Endothelial cell of umbilical vein (primary cell): ENCODE measurements at regions of chr3 and their contacts with region 1.

Region 1: DNA sequence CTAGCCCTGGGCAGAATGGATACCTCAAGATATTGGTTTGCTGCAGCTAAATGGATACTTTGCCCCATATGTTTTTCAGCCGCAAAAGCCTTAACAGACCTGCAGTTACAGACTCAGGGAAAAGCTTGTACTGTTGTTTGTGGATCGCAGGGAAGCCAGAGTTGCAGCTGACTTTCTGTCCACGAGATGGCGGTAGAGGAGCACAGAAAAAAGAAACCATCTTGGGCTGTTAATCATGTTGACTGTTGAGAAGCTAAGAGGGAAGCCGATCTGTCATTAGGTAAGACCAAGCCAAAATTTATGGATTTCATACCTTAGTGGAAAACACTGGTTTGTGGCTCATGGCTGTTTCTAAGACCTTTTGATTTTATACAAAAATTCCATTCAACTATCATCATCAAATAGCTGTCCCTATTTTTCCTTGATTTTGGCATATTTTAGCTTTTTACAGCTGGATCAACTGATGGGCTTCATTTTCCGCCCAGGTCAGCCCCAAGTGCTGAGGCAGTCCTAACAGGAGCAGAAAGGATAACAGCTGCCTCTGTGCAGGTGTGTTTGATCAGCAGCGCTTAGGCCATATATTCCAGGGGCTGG is 205.7 kb upstream of the ZPLD1 start:
- DNase-seq: peak; percentile 83
- H3K4me3 ChIP-seq: no peak overlapping the region
- H3K27ac ChIP-seq: no peak overlapping the region
- H3K4me1 ChIP-seq: no peaks in the 10 kb centered on the region
- H3K27me3 ChIP-seq: peaks cover 10 to 13% of the 10 kb centered on the region in 2 experiments
- CTCF ChIP-seq: peak; percentile 83 to 89
- POLR2A ChIP-seq: no peak

Region 2: DNA sequence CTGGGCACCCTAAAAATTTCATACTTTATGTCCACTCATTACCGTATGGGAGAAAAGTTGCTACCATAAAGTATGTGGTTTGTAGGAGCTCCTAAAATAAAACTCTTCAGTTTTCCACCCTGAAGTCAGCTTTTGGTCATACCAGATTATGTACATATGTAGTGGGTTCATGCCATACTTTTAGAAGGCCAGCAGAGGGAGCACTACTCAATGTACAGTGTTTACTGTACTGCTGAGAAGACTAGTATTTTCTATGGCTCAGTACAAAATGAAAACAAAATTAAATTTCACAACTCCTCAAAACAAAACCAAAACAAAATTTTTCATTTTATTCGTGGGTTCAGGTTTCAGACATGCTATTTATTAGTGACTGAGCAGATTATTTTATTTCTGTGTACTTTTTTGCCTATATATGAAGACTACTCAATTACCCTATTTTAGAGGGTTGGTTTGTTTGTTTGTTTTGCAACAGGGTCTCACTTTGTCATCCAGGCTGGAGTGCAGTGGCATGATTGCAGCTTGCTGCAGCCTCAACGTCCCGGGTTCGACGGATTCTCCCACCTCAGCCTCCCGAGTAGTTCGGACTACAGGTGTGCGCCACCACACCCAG is 425.9 kb before region 1 on chr3:
- CTCF ChIA-PET with region 1: interaction called, 358 read pairs
- POLR2A ChIA-PET with region 1: no interaction called
- dilution Hi-C with region 1: no loop called
- intact Hi-C with region 1: no loop called
- DNase-seq: peak; percentile 55
- H3K4me3 ChIP-seq: no peak overlapping the region
- H3K27ac ChIP-seq: no peak overlapping the region
- H3K4me1 ChIP-seq: no peaks in the 10 kb centered on the region
- H3K27me3 ChIP-seq: no peaks in the 10 kb centered on the region
- CTCF ChIP-seq: peak; percentile 61 to 66
- POLR2A ChIP-seq: no peak

Region 3: GRCh38 chr3:101861212-101861788 is 367.9 kb before region 1 on chr3:
- CTCF ChIA-PET with region 1: interaction called, 28 read pairs
- POLR2A ChIA-PET with region 1: no interaction called
- dilution Hi-C with region 1: no loop called
- intact Hi-C with region 1: no loop called
- DNase-seq: no peak
- H3K4me3 ChIP-seq: no peak overlapping the region
- H3K27ac ChIP-seq: no peak overlapping the region
- H3K4me1 ChIP-seq: peaks cover 5% of the 10 kb centered on the region
- H3K27me3 ChIP-seq: no peaks in the 10 kb centered on the region
- CTCF ChIP-seq: no peak
- POLR2A ChIP-seq: no peak

Region 4: DNA sequence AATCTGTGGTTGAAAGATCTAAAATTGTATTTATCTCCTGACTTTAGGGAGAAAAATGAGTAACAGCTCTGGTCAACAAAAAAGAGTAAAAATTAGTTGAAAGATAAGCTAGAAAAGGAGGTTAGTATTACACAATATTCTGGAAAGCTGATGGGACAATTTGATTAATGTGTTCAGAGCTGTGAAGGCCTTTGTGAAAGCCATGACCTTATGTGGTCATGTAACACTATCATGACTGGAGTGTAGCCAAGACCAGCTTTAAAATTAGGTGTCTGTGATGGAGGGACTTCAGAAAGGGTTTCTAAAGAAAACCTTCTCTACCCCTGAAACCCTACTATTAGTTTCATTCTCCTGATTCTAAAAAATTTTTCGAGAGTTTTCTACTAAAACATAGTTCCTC is 252.7 kb before region 1 on chr3:
- CTCF ChIA-PET with region 1: interaction called, 13 read pairs
- POLR2A ChIA-PET with region 1: no interaction called
- dilution Hi-C with region 1: no loop called
- intact Hi-C with region 1: no loop called
- DNase-seq: no peak
- H3K4me3 ChIP-seq: no peak overlapping the region
- H3K27ac ChIP-seq: no peak overlapping the region
- H3K4me1 ChIP-seq: no peaks in the 10 kb centered on the region
- H3K27me3 ChIP-seq: no peaks in the 10 kb centered on the region
- CTCF ChIP-seq: no peak
- POLR2A ChIP-seq: no peak

Region 5: DNA sequence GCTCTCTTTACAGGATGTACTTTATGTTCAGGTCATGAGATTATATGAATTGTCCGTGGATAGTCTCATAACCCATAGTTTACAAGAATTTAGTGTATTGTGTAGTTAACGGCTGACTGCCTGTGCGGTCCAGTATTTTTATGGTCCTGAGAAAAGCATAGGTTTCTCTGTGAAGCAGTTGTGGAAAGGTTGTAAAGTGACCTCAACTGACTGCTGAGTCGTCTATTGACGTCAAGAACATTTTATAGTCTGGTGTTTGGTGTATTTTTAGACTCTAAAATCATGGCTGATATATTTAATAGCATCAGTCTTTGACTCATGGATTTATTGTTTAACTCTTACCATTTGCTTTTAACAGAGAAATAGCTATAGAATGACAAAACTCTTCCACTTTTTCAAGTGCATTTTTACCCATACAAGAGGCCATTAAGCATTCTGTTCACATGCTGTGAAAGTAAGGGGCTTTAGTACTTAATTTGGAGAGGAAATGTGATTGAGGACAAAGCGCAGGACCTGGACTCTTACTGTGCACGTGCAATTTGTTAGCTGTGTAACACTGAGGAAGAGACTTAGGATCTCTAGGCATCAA is 139.2 kb before region 1 on chr3:
- CTCF ChIA-PET with region 1: interaction called, 10 read pairs
- POLR2A ChIA-PET with region 1: no interaction called
- dilution Hi-C with region 1: no loop called
- intact Hi-C with region 1: no loop called
- DNase-seq: peak; percentile 35
- H3K4me3 ChIP-seq: no peak overlapping the region
- H3K27ac ChIP-seq: no peak overlapping the region
- H3K4me1 ChIP-seq: peaks cover 22% of the 10 kb centered on the region
- H3K27me3 ChIP-seq: no peaks in the 10 kb centered on the region
- CTCF ChIP-seq: no peak
- POLR2A ChIP-seq: no peak

Region 6: DNA sequence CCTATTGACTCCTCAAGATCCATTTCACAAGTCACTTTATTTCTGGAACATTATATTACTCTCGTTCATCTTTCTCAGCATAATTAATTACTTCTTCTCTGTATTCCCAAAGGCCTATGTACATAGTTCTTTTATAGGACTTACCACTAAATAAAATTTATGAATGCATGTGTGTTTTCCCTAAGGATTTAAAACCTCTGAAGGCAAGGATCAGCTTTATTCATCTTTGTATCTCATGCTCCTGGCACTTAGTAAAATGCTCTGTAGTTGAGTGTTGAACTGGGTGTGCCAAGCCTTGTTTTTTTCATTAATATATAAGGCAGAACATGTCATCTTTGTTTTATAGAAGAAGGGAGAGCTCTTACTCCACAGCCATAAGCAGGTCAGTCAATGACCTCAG is 11.6 kb after region 1 on chr3:
- CTCF ChIA-PET with region 1: interaction called, 25 read pairs
- POLR2A ChIA-PET with region 1: no interaction called
- dilution Hi-C with region 1: no loop called
- intact Hi-C with region 1: no loop called
- DNase-seq: no peak
- H3K4me3 ChIP-seq: no peak overlapping the region
- H3K27ac ChIP-seq: no peak overlapping the region
- H3K4me1 ChIP-seq: no peaks in the 10 kb centered on the region
- H3K27me3 ChIP-seq: peaks cover 25 to 32% of the 10 kb centered on the region in 2 experiments
- CTCF ChIP-seq: no peak
- POLR2A ChIP-seq: no peak

Region 7: DNA sequence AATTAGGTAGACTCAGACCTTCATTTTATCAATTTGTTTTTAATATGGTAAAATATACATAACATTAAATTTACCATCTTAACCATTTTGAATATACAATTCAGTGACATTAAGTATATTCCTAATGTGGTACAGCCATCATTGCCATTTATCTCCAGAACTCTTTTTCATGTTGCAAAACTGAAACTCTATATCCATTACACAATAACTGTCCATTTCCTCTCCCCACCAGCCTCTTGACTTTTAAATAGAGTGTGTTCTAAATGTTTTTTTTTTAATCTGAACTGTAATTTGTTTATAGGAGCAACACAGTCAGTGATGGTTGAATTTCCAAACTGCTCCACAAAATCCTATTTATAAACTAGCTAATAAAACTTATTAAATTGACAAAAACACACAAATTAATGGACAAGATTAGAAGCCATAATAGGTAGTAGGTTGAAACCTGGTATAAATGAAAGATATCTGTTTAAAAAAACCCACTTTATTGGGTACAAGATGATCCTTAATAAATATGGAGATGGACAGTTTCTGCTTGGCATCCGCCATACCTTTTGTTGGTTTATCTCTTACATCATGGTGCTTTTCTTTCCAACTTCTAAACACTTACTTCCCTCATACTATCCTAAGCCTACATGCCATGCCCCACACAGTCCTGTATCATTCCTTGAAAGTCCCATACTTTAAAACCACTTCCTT is 348.1 kb after region 1 on chr3:
- CTCF ChIA-PET with region 1: no interaction called
- POLR2A ChIA-PET with region 1: no interaction called
- dilution Hi-C with region 1: no loop called
- intact Hi-C with region 1: no loop called
- DNase-seq: no peak
- H3K4me3 ChIP-seq: no peak overlapping the region
- H3K27ac ChIP-seq: no peak overlapping the region
- H3K4me1 ChIP-seq: no peaks in the 10 kb centered on the region
- H3K27me3 ChIP-seq: peaks cover 0 to 2% of the 10 kb centered on the region in 2 experiments
- CTCF ChIP-seq: no peak
- POLR2A ChIP-seq: no peak